H1 (cell line): ENCODE measurements at regions of chr17 and their contacts with region 1.

Region 1: GRCh38 chr17:44623070-44623725 is 33.1 kb upstream of the MEIOC start:
- DNase-seq: no peak
- H3K4me3 ChIP-seq: no peak overlapping the region
- H3K27ac ChIP-seq: no peak overlapping the region
- H3K4me1 ChIP-seq: peaks cover 0 to 7% (median 3%) of the 10 kb centered on the region in 4 experiments; a peak in 5 of 7 replicates
- H3K27me3 ChIP-seq: no peaks in the 10 kb centered on the region
- CTCF ChIP-seq: peak in 2 of 3 experiments; percentile 21 to 42; a peak in 2 of 4 replicates
- EP300 ChIP-seq: no peak
- POLR2A ChIP-seq: no peak
- RAD21 ChIP-seq: peak; percentile 46 to 59

Region 2: DNA sequence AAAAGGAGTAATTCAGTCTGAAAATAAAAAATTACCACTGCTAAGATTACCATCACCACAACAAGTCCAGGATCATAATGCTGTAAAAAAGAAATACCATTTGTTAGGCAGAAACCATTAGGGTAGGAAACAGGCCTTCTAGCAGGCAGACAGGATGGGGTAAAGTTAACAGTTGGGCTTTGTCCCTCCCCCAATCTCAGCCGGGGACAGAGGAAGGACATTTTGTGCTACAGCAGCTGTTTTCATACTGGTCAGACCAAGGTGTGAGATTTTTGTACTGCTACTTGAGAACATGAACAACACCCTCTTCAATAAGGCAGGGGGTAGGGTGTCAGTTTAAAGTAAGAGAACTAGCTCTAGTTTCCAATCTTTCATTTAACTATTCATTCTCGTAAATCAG is 184.6 kb before region 1 on chr17:
- CTCF ChIA-PET with region 1: no interaction called
- POLR2A ChIA-PET with region 1: no interaction called
- DNase-seq: no peak
- H3K4me3 ChIP-seq: no peak overlapping the region
- H3K27ac ChIP-seq: peak overlapping the region; percentile 26; the same call in 1 of the 2 replicates
- H3K4me1 ChIP-seq: peaks cover 0 to 3% (median 0%) of the 10 kb centered on the region in 4 experiments; a peak in 1 of 7 replicates
- H3K27me3 ChIP-seq: no peaks in the 10 kb centered on the region
- CTCF ChIP-seq: no peak
- EP300 ChIP-seq: no peak
- POLR2A ChIP-seq: no peak
- RAD21 ChIP-seq: no peak

Region 3: GRCh38 chr17:44581868-44582267 is 41.3 kb before region 1 on chr17:
- CTCF ChIA-PET with region 1: interaction called, 10 read pairs
- POLR2A ChIA-PET with region 1: no interaction called
- DNase-seq: no peak
- H3K4me3 ChIP-seq: no peak overlapping the region
- H3K27ac ChIP-seq: no peak overlapping the region
- H3K4me1 ChIP-seq: no peaks in the 10 kb centered on the region; a peak in 1 of 7 replicates
- H3K27me3 ChIP-seq: 0 out of 7 replicates have a peak, but pooled peaks cover 0 to 2% (median 1%) of the 10 kb centered on the region in 4 experiments
- CTCF ChIP-seq: peak; percentile 36 to 51 (median 41); a peak in 3 of 4 replicates
- EP300 ChIP-seq: no peak
- POLR2A ChIP-seq: no peak
- RAD21 ChIP-seq: peak; percentile 36 to 56; a peak in 3 of 4 replicates

Region 4: GRCh38 chr17:44607836-44608690 is 15.1 kb before region 1 on chr17:
- CTCF ChIA-PET with region 1: interaction called, 23 read pairs
- POLR2A ChIA-PET with region 1: interaction called, 9 read pairs
- DNase-seq: peak in 1 of 2 experiments; percentile 31
- H3K4me3 ChIP-seq: no peak overlapping the region
- H3K27ac ChIP-seq: no peak overlapping the region; the same call in 1 of the 2 replicates
- H3K4me1 ChIP-seq: peaks cover 4 to 16% (median 12%) of the 10 kb centered on the region in 4 experiments
- H3K27me3 ChIP-seq: no peaks in the 10 kb centered on the region
- CTCF ChIP-seq: no peak
- EP300 ChIP-seq: no peak
- POLR2A ChIP-seq: no peak
- RAD21 ChIP-seq: no peak; a peak in 1 of 4 replicates